Prostate gland (tissue), 2 donors: ENCODE measurements at regions of chr14 and their contacts with region 1.

Region 1: DNA sequence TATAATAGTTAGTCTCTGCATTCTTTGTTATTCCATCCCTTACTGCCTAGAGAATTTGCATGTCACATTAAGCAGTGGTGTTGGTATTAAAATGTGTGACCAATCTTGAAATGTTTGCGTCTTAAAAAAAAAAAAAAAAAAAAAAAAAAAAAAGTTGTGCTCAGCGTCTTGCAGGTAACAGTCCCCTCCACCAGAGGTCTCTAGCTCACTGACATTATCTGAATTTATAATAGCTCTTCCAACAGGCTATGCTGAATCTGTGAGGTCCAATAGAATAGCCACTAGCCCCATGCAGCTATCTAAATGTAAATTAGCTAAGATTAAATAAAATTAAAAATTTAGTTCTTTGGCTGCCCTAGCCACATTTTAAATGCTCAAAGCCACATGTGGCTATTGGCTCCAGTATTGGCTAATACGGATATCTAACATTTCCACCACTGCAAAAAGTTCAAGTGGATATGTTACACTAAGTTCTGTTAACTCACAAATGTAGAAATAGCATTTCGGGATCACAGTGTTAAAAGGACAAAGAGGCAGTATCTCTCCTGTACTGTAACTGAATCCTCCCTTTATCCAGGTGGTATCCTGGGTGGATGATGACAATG is 28.7 kb downstream of the NKX2-8 start:
- DNase-seq: peak; percentile 27
- H3K4me3 ChIP-seq: no peak overlapping the region
- H3K27ac ChIP-seq: no peak overlapping the region
- H3K4me1 ChIP-seq: no peaks in the 10 kb centered on the region
- H3K27me3 ChIP-seq: no peaks in the 10 kb centered on the region
- CTCF ChIP-seq: peak; percentile 26 to 52 (median 40)
- POLR2A ChIP-seq: no peak

Region 2: DNA sequence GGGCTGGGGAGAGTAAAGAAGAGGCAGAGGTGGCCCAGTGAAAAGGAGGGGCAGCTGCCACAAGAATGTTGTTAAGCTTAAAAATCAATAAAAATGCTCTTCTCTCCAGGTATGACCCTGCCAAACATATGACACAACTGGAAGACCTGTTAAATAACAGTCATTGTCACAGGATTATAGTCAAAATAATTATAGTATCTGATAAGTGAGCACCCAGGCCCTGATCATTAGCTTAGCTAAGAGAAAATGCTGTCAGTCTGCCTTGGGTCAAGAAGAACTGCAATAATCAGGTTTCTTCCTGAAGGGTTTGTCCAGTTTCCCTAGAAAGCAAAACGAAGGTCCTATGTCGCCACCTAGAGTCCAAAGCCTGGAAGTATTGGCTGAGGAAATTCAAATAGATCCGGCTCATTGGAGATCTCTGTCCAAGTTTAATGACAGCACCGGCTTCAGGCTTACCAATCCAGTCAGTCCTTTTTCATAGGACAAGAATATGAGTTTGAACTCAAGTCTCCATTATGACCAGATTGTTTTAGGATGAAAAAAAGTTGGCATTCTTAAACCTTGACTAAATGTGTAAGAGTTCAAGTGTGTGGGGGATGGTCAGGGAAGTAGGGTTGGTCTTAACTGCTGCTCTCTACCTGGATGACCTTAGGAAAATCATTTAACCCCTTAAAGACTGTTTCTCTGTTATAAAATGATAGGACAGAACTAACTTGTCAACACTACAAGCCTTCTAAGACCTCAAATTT is 51.2 kb after region 1 on chr14:
- intact Hi-C with region 1: loop called (anchors 10 kb)
- DNase-seq: peak; percentile 63
- H3K4me3 ChIP-seq: no peak overlapping the region
- H3K27ac ChIP-seq: no peak overlapping the region
- H3K4me1 ChIP-seq: no peaks in the 10 kb centered on the region
- H3K27me3 ChIP-seq: no peaks in the 10 kb centered on the region
- CTCF ChIP-seq: peak; percentile 29 to 77 (median 74)
- POLR2A ChIP-seq: no peak

Region 3: GRCh38 chr14:36941783-36942521 is 388.2 kb after region 1 on chr14:
- intact Hi-C with region 1: loop called (anchors 5 kb)
- DNase-seq: peak; percentile 67
- H3K4me3 ChIP-seq: no peak overlapping the region
- H3K27ac ChIP-seq: no peak overlapping the region
- H3K4me1 ChIP-seq: no peaks in the 10 kb centered on the region
- H3K27me3 ChIP-seq: no peaks in the 10 kb centered on the region
- CTCF ChIP-seq: peak; percentile 84 to 91 (median 90)
- POLR2A ChIP-seq: no peak